H1 (cell line): ENCODE measurements at regions of chr21 and their contacts with region 1.

Region 1: GRCh38 chr21:45831991-45832740 is 149.4 kb upstream of the COL6A1 start:
- DNase-seq: peak in 1 of 2 experiments; percentile 29
- H3K4me3 ChIP-seq: no peak overlapping the region
- H3K27ac ChIP-seq: no peak overlapping the region
- H3K4me1 ChIP-seq: peaks cover 0 to 2% (median 0%) of the 10 kb centered on the region in 4 experiments; a peak in 1 of 7 replicates
- H3K27me3 ChIP-seq: no peaks in the 10 kb centered on the region
- CTCF ChIP-seq: no peak
- EP300 ChIP-seq: no peak
- POLR2A ChIP-seq: no peak
- RAD21 ChIP-seq: no peak

Region 2: GRCh38 chr21:45820171-45821091 is 11.7 kb before region 1 on chr21:
- CTCF ChIA-PET with region 1: interaction called, 17 read pairs
- POLR2A ChIA-PET with region 1: interaction called, 3 read pairs
- DNase-seq: peak; percentile 85 to 89
- H3K4me3 ChIP-seq: no peak overlapping the region
- H3K27ac ChIP-seq: no peak overlapping the region
- H3K4me1 ChIP-seq: peaks cover 0 to 8% (median 1%) of the 10 kb centered on the region in 4 experiments; a peak in 2 of 7 replicates
- H3K27me3 ChIP-seq: no peaks in the 10 kb centered on the region
- CTCF ChIP-seq: peak; percentile 84 to 97 (median 90)
- EP300 ChIP-seq: no peak; a peak in 1 of 3 replicates
- POLR2A ChIP-seq: no peak
- RAD21 ChIP-seq: peak; percentile 96 to 97